HEK293 (cell line): ENCODE measurements at regions of chr15 and their contacts with region 1.

Region 1: GRCh38 chr15:68053701-68054627 is at the start of gene PIAS1:
- H3K4me3 ChIP-seq: peak within 1 kb of the TSS; percentile 94
- H3K27ac ChIP-seq: peak within 1 kb of the TSS; percentile 94
- H3K4me1 ChIP-seq: peaks cover 36% of the 10 kb centered on the region
- CTCF ChIP-seq: peak; percentile 85

Region 2: DNA sequence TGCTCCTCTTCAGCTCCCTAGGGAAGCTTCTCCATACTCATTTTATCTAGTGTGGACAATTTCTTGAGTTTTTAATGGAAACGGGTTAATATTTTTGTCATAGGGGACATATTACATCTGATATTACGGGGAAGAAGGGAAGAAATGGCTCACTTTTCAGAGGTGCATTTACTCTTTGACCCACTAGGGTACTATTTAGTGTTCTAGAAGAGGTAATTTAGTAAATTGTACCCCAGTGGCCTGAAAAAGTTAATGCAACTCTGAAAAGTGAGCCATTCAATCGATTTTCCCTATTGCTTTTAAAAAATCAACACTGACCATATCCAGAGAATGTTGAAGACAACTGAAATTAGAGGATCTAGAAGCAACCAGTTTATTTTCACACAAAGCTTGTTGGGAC is 440.3 kb before region 1 on chr15:
- CTCF ChIA-PET with region 1: no interaction called
- POLR2A ChIA-PET with region 1: no interaction called
- H3K4me3 ChIP-seq: no peak overlapping the region
- H3K27ac ChIP-seq: no peak overlapping the region
- H3K4me1 ChIP-seq: peaks cover 3% of the 10 kb centered on the region; the same call in 1 of the 2 replicates
- CTCF ChIP-seq: no peak

Region 3: GRCh38 chr15:67902579-67903009 is 151.4 kb before region 1 on chr15:
- CTCF ChIA-PET with region 1: no interaction called
- POLR2A ChIA-PET with region 1: no interaction called
- H3K4me3 ChIP-seq: no peak overlapping the region
- H3K27ac ChIP-seq: no peak overlapping the region
- H3K4me1 ChIP-seq: no peaks in the 10 kb centered on the region
- CTCF ChIP-seq: no peak

Region 4: GRCh38 chr15:67914537-67915460 is 139.2 kb before region 1 on chr15:
- CTCF ChIA-PET with region 1: no interaction called
- POLR2A ChIA-PET with region 1: no interaction called
- H3K4me3 ChIP-seq: no peak overlapping the region
- H3K27ac ChIP-seq: peak overlapping the region; percentile 63
- H3K4me1 ChIP-seq: peaks cover 14% of the 10 kb centered on the region
- CTCF ChIP-seq: no peak

Region 5: DNA sequence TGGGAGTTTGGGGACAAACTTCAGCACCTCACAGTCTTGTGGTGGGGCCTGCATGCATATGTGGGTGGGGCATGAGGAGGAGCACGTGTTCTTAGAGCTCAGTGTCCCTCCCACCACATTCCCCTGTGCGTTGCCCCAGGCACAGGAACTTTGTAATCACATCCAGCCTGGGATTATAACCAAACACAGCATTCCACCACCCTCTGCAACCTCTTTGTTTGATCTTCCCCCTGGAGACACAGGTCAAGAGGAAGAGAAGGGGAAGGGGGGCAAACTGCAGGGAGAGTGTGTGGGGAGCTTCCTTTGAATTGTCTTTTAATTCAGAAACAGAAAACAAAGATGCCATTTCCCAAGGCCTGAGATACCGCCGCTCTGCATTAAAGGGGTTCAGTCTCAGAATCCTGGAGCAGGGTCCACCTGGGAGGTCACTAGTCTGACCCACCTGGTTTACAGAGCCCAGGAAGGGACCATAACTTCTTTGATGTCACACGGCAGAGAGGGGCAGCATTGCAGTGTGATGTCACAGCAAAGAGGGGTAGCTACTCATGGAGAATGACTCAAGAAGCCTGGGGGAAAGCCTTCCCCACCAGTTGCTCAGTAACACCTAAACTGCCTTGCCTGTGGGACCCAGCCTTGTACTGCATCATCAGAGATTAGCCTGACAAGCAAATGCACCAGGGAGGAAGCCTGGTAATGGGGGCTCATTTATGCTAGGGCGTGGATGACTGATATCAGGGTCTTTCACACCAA is 107.8 kb before region 1 on chr15:
- CTCF ChIA-PET with region 1: interaction called, 5 read pairs
- POLR2A ChIA-PET with region 1: interaction called, 10 read pairs
- H3K4me3 ChIP-seq: no peak overlapping the region
- H3K27ac ChIP-seq: peak overlapping the region; percentile 10; the same call in 1 of the 2 replicates
- H3K4me1 ChIP-seq: peaks cover 11% of the 10 kb centered on the region; the same call in 1 of the 2 replicates
- CTCF ChIP-seq: no peak

Region 6: DNA sequence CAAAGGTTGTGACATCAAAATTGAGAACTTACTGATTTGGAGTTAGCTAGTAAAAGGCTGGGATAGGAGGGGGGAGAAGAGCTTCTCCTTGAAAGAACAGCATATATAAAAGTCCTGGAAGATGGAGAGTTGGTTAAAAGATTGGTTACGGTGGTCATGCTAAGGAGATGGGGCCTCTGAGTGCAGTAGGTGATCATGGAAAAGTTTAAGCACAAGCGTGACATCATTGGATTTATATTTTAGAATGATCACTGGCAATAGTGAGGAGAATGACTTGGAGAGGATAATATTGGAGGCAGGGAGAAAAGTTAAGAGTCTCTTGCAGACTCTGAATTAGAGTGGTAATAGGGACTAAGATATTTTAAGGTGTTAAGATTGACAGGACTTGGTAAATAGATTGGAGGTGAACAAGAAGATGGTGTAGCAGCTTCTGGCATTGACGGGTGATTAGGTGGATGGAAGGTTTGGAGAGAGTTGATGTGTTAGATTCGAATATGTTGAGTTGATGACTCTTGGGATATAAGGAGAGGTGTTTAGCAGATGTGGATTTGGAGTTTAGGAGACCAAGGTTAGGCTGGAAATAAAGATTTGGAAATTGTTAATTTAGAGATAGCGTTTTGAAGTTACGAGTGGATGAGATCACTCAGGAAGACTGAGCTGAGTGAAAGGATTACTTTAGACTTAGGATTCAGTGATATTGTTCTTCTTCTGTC is 19.8 kb after region 1 on chr15:
- CTCF ChIA-PET with region 1: interaction called, 4 read pairs
- POLR2A ChIA-PET with region 1: interaction called, 11 read pairs
- H3K4me3 ChIP-seq: no peak overlapping the region
- H3K27ac ChIP-seq: no peak overlapping the region
- H3K4me1 ChIP-seq: peaks cover 37% of the 10 kb centered on the region
- CTCF ChIP-seq: no peak